ENCODE measurements at regions of chr4 and their contacts with region 1.

Region 1: DNA sequence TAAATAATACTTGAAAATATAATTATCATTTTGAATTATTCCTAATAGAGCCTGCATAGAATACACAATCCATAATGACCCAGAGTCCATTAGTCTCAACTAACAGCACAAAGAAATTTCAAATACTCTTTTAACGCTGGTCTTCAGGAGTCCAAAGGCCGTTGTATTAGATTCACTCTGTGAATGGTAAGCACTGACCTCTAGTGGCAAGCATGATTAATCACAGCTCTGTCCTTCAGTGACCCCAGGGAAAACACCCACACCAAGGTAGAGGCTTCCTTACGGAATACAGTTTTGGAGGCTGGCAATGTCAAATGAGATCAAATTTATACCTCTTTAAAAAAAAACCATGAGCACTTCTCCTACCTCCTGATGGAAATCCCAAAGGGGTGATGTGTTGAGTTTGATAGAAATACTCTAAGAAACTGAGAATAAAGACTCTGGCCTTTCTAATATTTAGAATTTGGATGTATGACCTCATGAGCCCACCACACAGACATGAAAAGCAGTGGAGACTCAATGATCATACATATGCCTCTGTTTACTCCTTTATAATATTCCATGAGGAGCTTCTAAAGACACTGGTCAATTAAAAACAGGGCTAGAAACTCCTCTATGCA is 147.2 kb upstream of the DKK2 start:
- DNase-seq: peak; percentile 69
- H3K4me3 ChIP-seq: no peak overlapping the region
- H3K27ac ChIP-seq: no peak overlapping the region
- H3K4me1 ChIP-seq: no peaks in the 10 kb centered on the region
- H3K27me3 ChIP-seq: no peaks in the 10 kb centered on the region
- CTCF ChIP-seq: peak; percentile 63 to 70
- POLR2A ChIP-seq: no peak

Region 2: DNA sequence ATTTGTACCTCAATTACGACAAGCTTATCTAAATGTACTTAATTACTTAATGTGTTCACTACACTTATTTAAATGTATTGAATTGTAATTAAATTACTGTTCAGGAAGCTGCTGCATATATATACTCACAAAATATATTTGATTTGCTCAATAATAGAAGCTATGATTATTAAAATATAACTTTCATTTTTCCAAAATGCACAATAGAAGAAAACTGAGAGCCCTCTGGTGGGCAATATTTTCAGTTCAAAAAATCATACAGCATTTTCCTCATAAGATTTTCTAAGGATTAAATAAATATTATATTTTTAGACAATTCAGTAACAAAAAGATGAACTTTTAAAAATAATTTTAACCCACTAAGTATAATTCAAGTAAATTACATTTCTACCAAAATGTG is 364.5 kb before region 1 on chr4:
- CTCF ChIA-PET with region 1: interaction called, 7 read pairs
- POLR2A ChIA-PET with region 1: no interaction called
- dilution Hi-C with region 1: no loop called
- intact Hi-C with region 1: loop called (anchors 10 kb)
- DNase-seq: no peak
- H3K4me3 ChIP-seq: no peak overlapping the region
- H3K27ac ChIP-seq: no peak overlapping the region
- H3K4me1 ChIP-seq: no peaks in the 10 kb centered on the region
- H3K27me3 ChIP-seq: no peaks in the 10 kb centered on the region
- CTCF ChIP-seq: no peak
- POLR2A ChIP-seq: no peak

Region 3: GRCh38 chr4:107037199-107037584 is 146.1 kb before region 1 on chr4:
- CTCF ChIA-PET with region 1: interaction called, 202 read pairs
- POLR2A ChIA-PET with region 1: no interaction called
- dilution Hi-C with region 1: no loop called
- intact Hi-C with region 1: loop called (anchors 1 kb)
- DNase-seq: peak; percentile 43
- H3K4me3 ChIP-seq: peak overlapping the region in 1 of 3 experiments; percentile 84
- H3K27ac ChIP-seq: no peak overlapping the region
- H3K4me1 ChIP-seq: peaks cover 34% of the 10 kb centered on the region
- H3K27me3 ChIP-seq: peaks cover 17 to 19% of the 10 kb centered on the region in 2 experiments
- CTCF ChIP-seq: peak; percentile 65 to 77
- POLR2A ChIP-seq: no peak

Region 4: GRCh38 chr4:107050525-107051135 is 132.6 kb before region 1 on chr4:
- CTCF ChIA-PET with region 1: interaction called, 202 read pairs
- POLR2A ChIA-PET with region 1: no interaction called
- dilution Hi-C with region 1: no loop called
- intact Hi-C with region 1: loop called (anchors 1 kb)
- DNase-seq: peak; percentile 12
- H3K4me3 ChIP-seq: no peak overlapping the region
- H3K27ac ChIP-seq: no peak overlapping the region
- H3K4me1 ChIP-seq: no peaks in the 10 kb centered on the region
- H3K27me3 ChIP-seq: no peaks in the 10 kb centered on the region
- CTCF ChIP-seq: peak; percentile 51 to 55
- POLR2A ChIP-seq: no peak

Region 5: GRCh38 chr4:107133965-107134653 is 49.2 kb before region 1 on chr4:
- CTCF ChIA-PET with region 1: no interaction called
- POLR2A ChIA-PET with region 1: no interaction called
- dilution Hi-C with region 1: no loop called
- intact Hi-C with region 1: no loop called
- DNase-seq: no peak
- H3K4me3 ChIP-seq: no peak overlapping the region
- H3K27ac ChIP-seq: no peak overlapping the region
- H3K4me1 ChIP-seq: peaks cover 27% of the 10 kb centered on the region
- H3K27me3 ChIP-seq: no peaks in the 10 kb centered on the region
- CTCF ChIP-seq: no peak
- POLR2A ChIP-seq: no peak

Region 6: GRCh38 chr4:107519053-107519452 is 335.8 kb after region 1 on chr4:
- CTCF ChIA-PET with region 1: interaction called, 4 read pairs
- POLR2A ChIA-PET with region 1: no interaction called
- dilution Hi-C with region 1: no loop called
- intact Hi-C with region 1: loop called (anchors 10 kb)
- DNase-seq: peak; percentile 44
- H3K4me3 ChIP-seq: no peak overlapping the region
- H3K27ac ChIP-seq: no peak overlapping the region
- H3K4me1 ChIP-seq: no peaks in the 10 kb centered on the region
- H3K27me3 ChIP-seq: no peaks in the 10 kb centered on the region
- CTCF ChIP-seq: peak in 1 of 2 donors; percentile 29
- POLR2A ChIP-seq: no peak

Region 7: DNA sequence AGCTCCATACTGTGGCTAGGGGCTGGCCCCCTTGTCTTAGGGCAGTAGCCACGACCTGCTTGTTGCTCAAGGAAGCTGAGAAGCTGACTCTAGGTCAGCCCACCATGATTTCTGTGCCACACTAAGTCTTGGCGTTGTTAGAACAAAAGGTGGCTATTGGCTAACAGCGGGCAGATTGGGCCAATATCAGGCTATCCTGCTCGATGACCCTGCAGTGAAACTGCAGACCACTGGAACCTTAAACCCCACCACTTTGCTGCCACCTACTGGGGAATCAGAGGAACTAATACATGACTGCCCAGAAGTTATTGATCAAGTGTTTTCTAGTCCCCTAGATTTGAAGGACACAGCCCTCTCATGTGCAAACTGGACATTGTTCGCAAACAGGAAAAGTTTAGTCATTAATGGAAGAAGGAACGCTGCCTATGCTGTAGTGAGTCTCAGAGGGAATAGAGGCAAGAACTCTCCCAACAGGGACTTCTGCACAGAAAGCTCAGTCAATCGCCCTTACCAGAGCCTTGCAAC is 553.7 kb after region 1 on chr4:
- CTCF ChIA-PET with region 1: interaction called, 15 read pairs
- POLR2A ChIA-PET with region 1: no interaction called
- dilution Hi-C with region 1: no loop called
- intact Hi-C with region 1: loop called (anchors 1 kb)
- DNase-seq: peak; percentile 58
- H3K4me3 ChIP-seq: no peak overlapping the region
- H3K27ac ChIP-seq: no peak overlapping the region
- H3K4me1 ChIP-seq: peaks cover 6% of the 10 kb centered on the region
- H3K27me3 ChIP-seq: no peaks in the 10 kb centered on the region
- CTCF ChIP-seq: peak; percentile 64 to 77
- POLR2A ChIP-seq: no peak

Region 8: GRCh38 chr4:108008721-108009120 is 825.5 kb after region 1 on chr4:
- CTCF ChIA-PET with region 1: no interaction called
- POLR2A ChIA-PET with region 1: no interaction called
- dilution Hi-C with region 1: no loop called
- intact Hi-C with region 1: no loop called
- DNase-seq: no peak
- H3K4me3 ChIP-seq: no peak overlapping the region
- H3K27ac ChIP-seq: no peak overlapping the region
- H3K4me1 ChIP-seq: no peaks in the 10 kb centered on the region
- H3K27me3 ChIP-seq: no peaks in the 10 kb centered on the region
- CTCF ChIP-seq: no peak
- POLR2A ChIP-seq: no peak